HepG2 (cell line): ENCODE measurements at regions of chr9 and their contacts with region 1.

Region 1: GRCh38 chr9:86413966-86414880 is 60.0 kb upstream of the TUT7 start:
- DNase-seq: peak; percentile 25
- ATAC-seq: peak; percentile 56; the same call in 2 of the 3 replicates
- H3K4me3 ChIP-seq: no peak overlapping the region
- H3K27ac ChIP-seq: no peak overlapping the region
- H3K4me1 ChIP-seq: no peaks in the 10 kb centered on the region
- H3K27me3 ChIP-seq: no peaks in the 10 kb centered on the region; a peak in 1 of 5 replicates
- CTCF ChIP-seq: peak; percentile 56
- EP300 ChIP-seq: no peak
- POLR2A ChIP-seq: no peak
- RAD21 ChIP-seq: no peak

Region 2: DNA sequence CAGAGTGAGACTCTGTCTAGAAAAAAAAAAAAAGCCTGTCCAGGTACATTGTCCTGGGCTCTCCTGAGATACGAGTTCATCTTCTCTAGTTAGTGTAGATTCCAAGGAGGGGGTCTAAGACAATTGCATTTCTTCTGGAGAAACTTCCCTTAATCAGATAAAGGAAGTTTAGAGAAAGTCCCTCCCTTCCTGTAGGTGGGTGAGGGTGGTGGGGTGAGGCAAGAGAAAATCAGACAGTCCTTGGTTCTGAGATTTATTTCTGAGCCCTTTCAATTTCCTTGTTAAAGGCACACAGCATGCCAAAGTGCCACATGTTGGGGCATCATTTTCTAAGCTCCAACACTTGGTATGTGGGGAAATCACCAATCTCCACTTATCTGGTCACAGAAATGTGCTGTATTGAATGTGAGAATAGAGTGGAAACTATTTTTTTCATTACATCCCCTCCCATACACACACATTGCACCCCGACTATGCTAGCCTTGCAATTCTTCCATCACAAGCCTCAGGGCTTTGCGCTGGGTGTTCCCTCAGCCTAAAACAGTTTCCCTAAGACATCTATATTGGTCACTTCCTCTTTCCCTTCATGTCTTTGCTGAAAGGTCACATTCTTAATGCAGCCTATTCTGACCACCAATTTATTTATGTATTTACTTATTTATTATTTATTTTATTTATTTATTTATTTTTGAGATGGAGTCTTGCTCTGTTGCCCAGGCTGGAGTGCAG is 54.9 kb before region 1 on chr9:
- CTCF ChIA-PET with region 1: no interaction called
- POLR2A ChIA-PET with region 1: no interaction called
- in situ Hi-C with region 1: no loop called
- intact Hi-C with region 1: no loop called
- DNase-seq: no peak
- ATAC-seq: no peak
- H3K4me3 ChIP-seq: no peak overlapping the region
- H3K27ac ChIP-seq: no peak overlapping the region
- H3K4me1 ChIP-seq: peaks cover 13% of the 10 kb centered on the region
- H3K27me3 ChIP-seq: peaks cover 0 to 2% of the 10 kb centered on the region in 2 experiments; a peak in 1 of 5 replicates
- CTCF ChIP-seq: no peak
- EP300 ChIP-seq: no peak
- POLR2A ChIP-seq: no peak
- RAD21 ChIP-seq: no peak

Region 3: GRCh38 chr9:86486891-86487837 is 72.9 kb after region 1 on chr9:
- CTCF ChIA-PET with region 1: no interaction called
- POLR2A ChIA-PET with region 1: no interaction called
- in situ Hi-C with region 1: no loop called
- intact Hi-C with region 1: loop called (anchors 5 kb)
- DNase-seq: peak; percentile 23
- ATAC-seq: no peak
- H3K4me3 ChIP-seq: no peak overlapping the region
- H3K27ac ChIP-seq: no peak overlapping the region
- H3K4me1 ChIP-seq: no peaks in the 10 kb centered on the region
- H3K27me3 ChIP-seq: no peaks in the 10 kb centered on the region; a peak in 2 of 5 replicates
- CTCF ChIP-seq: peak; percentile 55
- EP300 ChIP-seq: no peak
- POLR2A ChIP-seq: no peak
- RAD21 ChIP-seq: peak; percentile 28; the same call in 1 of the 2 replicates

Region 4: DNA sequence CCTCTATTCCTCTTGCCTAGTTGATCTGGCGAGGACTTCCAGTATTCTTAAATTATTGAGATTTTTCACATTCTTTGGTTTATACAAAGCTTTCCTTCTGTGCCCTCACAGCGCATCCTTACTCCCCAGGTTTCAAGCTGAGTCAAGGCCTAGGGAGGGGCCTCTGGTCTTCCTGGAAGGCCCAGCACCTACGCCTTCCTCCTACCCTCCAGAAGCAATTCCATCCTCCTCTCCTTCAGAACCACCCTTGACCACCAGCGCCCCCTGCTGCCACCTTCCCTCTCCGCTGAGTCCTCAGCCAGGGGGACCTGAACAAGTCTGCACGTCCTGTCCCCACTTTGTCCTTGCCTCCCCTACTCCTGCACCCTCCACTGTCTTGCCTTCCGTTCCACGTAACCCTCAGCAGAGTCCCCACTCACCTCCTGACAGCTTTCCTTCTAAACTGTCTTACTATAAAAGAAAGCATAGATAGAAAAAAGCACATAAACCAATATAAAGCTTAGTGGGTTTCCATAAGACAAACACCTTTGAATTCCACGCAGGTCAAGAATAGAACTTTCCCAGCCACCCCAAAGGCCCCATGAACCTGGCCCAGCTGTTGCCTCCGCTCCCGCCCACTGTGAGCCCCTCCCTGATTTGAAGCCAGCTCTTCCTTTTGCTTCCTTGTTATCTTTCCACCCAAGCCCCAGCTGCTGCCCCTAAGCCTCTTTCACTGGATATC is 1248.7 kb after region 1 on chr9:
- CTCF ChIA-PET with region 1: no interaction called
- POLR2A ChIA-PET with region 1: no interaction called
- in situ Hi-C with region 1: loop called (anchors 25 kb)
- intact Hi-C with region 1: no loop called
- DNase-seq: peak; percentile 41
- ATAC-seq: peak; percentile 88
- H3K4me3 ChIP-seq: no peak overlapping the region
- H3K27ac ChIP-seq: no peak overlapping the region
- H3K4me1 ChIP-seq: no peaks in the 10 kb centered on the region
- H3K27me3 ChIP-seq: no peaks in the 10 kb centered on the region
- CTCF ChIP-seq: peak; percentile 95
- EP300 ChIP-seq: no peak
- POLR2A ChIP-seq: no peak
- RAD21 ChIP-seq: peak; percentile 86